Mammary epithelial cell (primary cell): ENCODE measurements at regions of chr12 and their contacts with region 1.

Region 1: DNA sequence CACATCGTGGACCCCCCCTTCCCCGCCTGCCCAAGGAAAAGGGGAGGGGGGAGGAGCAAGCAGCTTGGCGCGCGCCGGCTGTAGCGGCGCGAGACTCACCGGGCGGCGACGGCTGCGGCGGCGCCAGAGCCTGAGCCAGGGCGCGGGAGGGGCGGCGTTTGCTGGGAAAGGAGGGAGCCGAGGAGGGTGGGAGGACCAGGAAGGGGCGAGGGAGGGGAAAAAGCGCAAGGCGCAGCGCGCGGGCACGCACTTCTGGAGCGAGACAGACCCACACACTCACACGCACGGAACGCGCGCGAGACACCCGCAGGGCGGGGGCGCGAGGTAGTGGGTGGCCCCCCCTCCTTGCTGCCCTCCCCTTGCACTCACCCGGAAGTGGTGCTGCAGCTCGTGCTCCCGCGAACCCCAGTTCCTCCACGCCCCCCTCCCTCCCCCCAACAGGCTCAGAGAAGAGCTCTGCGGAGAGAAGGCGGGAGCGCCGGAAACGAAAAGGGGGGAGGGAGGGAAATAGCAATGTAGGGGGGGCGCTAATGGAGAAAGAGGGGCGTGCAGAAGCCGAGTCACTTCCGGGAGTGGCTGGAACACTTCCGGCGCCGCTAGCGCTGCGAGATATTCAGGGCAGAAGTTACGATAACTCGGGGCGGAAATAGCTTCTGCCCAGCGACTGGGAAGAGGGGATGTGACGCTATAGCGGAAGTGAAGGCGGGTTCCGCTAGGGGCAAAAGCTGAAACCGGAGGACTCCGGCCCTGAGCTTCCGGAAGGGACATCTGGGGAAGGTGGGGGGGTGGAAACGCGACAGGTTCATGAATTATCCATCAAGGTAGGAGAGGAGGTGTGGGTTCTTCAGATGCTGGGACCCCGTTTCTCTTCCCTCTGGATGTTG is at the start of gene ZNF384:
- DNase-seq: peak; percentile 99
- H3K4me3 ChIP-seq: peak within 1 kb of the TSS; percentile 76 to 93 (median 87)
- H3K27ac ChIP-seq: peak within 1 kb of the TSS; percentile 84
- H3K4me1 ChIP-seq: peaks cover 7% of the 10 kb centered on the region
- H3K27me3 ChIP-seq: no peaks in the 10 kb centered on the region
- CTCF ChIP-seq: peak in 1 of 2 donors; percentile 9
- total RNA-seq, gene ZNF384: 12.8 to 45.0 TPM

Region 2: DNA sequence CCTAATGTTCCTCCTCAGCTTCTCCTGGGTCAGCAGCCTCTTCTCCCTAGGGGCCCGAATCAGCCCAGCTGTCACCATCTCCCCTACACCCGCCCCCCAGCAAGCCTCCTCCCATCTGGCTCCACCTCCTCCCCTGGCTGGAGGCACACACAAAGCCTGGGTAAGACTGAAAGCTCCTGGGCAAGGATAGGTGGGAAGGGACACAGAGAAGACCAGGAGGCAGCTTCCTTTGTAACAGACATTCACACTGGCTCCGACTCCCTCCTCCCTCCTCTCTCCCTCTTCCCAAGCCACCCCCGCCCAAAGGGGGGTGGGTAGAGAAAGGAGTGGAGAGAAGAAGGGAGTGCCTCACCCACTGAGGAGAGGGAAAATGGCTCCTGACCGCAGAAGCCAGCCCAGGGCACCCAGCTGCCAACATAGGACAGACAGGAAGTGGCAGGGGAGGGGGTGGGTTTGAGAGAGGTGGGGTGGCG is 86.1 kb before region 1 on chr12:
- CTCF ChIA-PET with region 1: no interaction called
- dilution Hi-C with region 1: loop called (anchors 5 kb)
- in situ Hi-C with region 1: no loop called
- intact Hi-C with region 1: no loop called
- DNase-seq: peak; percentile 20
- H3K4me3 ChIP-seq: peak overlapping the region in 1 of 3 experiments; percentile 8
- H3K27ac ChIP-seq: no peak overlapping the region
- H3K4me1 ChIP-seq: peaks cover 32% of the 10 kb centered on the region
- H3K27me3 ChIP-seq: no peaks in the 10 kb centered on the region
- CTCF ChIP-seq: no peak

Region 3: GRCh38 chr12:6632026-6632983 is 56.9 kb before region 1 on chr12:
- CTCF ChIA-PET with region 1: no interaction called
- dilution Hi-C with region 1: loop called (anchors 5 kb)
- in situ Hi-C with region 1: no loop called
- intact Hi-C with region 1: no loop called
- DNase-seq: no peak
- H3K4me3 ChIP-seq: no peak overlapping the region
- H3K27ac ChIP-seq: no peak overlapping the region
- H3K4me1 ChIP-seq: peaks cover 5% of the 10 kb centered on the region
- H3K27me3 ChIP-seq: no peaks in the 10 kb centered on the region
- CTCF ChIP-seq: no peak

Region 4: GRCh38 chr12:6723607-6724396 is 34.6 kb after region 1 on chr12 and contains the start of gene COPS7A:
- CTCF ChIA-PET with region 1: no interaction called
- dilution Hi-C with region 1: no loop called
- in situ Hi-C with region 1: no loop called
- intact Hi-C with region 1: loop called (anchors 1 kb)
- DNase-seq: peak; percentile 99
- H3K4me3 ChIP-seq: peak within 1 kb of the TSS; percentile 63 to 79 (median 70)
- H3K27ac ChIP-seq: peak within 1 kb of the TSS; percentile 69
- H3K4me1 ChIP-seq: peaks cover 6% of the 10 kb centered on the region
- H3K27me3 ChIP-seq: no peaks in the 10 kb centered on the region
- CTCF ChIP-seq: no peak
- total RNA-seq, gene COPS7A: 54.2 to 57.2 TPM

Region 5: GRCh38 chr12:6792522-6793201 is 103.4 kb after region 1 on chr12:
- CTCF ChIA-PET with region 1: no interaction called
- dilution Hi-C with region 1: loop called (anchors 5 kb)
- in situ Hi-C with region 1: no loop called
- intact Hi-C with region 1: no loop called
- DNase-seq: no peak
- H3K4me3 ChIP-seq: no peak overlapping the region
- H3K27ac ChIP-seq: no peak overlapping the region
- H3K4me1 ChIP-seq: peaks cover 4% of the 10 kb centered on the region
- H3K27me3 ChIP-seq: no peaks in the 10 kb centered on the region
- CTCF ChIP-seq: no peak